ENCODE measurements at regions of chr19 and their contacts with region 1.

Region 1: DNA sequence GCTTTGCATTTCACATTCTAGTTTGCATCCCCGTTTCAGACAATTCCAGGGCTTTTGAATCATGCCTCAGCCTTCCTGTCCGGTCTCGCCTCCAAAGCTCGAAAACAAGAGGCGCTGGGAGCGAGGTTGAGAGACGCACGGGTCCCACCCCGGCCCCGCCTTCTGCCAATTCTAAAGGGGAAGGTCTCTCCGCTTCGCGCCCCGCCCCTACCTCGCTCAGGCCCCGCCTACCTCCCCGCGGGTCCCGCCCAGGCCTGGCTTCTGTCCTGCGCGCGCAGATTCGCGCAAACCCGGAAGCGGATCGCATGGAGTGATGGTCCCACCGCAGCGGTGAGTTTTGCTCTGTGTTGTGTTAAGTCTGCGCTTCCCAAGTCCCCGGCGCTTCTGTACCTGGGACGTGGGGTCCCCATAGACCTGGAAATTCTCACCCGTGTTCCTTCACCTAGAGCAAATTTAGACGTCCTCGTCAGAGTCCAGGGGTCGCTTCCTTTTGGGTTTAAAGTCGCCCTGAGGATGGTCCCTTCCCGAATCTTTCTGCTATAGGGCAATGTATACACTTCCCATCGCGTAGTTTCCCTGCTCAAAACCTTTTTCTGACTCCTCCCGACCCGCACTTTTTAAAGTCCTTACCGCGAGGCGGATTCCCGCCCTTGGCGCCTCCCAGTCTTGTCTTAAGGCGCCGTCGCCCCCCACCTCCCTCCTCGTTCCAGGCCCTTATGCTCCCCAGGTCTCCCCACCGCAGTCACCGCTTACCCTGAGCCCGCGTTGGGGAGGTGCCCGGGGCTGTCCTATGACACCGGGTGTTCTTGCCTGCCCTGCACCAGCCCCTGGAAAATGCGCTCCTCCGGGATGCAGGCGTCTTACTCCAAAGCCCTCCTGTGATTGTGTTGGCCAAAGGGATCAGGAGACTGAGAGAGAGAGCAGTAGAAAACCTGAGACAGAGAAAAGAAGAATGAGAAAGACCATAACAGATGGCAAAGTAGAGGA is at the start of gene ZNF845:
- DNase-seq: peak; percentile 73 to 74
- ATAC-seq: peak; percentile 91 to 97
- H3K4me3 ChIP-seq: peak within 1 kb of the TSS; percentile 61 to 74 (median 71)
- H3K27ac ChIP-seq: peak within 1 kb of the TSS; percentile 61 to 75 (median 69)
- H3K4me1 ChIP-seq: no peaks in the 10 kb centered on the region
- H3K27me3 ChIP-seq: no peaks in the 10 kb centered on the region
- CTCF ChIP-seq: no peak
- POLR2A ChIP-seq: peak in 1 of 2 donors; percentile 19
- total RNA-seq, gene ZNF845: 1.00 to 2.3 (median 1.4) TPM

Region 2: DNA sequence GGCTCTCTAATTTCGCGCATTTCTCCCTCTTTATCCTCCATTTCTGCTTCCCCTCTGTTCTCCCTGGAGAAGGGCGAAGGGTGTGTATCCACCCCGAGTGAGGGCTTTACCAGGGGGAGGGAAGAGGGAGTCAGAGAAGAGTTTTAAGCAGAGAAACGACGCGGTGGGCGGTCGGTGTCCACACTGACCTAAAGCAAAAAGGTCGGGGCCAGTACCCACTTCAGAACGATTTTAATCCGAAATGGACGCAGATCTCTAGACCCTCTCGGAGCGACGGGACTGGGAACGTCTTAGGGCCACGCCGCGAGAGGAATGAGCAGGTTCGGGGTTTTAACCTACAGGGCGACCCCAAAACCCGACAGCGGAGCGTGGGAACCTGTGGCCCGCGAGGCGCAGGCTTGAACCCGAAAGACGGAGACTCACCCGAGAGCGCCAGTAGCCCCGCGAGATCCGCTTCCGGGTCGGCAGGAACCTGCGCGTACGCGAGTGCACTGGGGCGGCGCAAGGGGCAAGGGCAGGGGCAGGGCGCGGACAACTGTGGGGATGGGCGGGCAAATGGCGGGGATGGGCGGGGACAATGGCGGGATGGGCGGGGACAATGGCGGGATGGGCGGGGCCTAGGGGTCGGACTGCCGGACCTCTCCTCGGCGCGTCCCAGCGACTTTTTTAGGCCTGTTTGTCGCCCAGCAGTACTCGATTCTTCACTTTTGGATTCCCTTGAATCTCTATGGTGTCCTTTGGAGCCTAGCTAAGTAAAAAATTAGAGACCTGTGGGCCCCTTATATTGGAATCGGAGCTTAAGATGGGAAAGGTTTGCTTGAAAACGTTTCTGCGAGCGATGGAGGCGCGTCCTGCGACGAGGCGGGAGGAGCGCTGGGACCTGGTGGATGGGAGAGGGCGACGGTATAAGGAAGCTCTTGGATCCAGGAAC is 79.1 kb before region 1 on chr19 and contains the start of gene ZNF677:
- in situ Hi-C with region 1: loop called in 1 of 4 experiments (anchors 10 kb)
- intact Hi-C with region 1: no loop called
- DNase-seq: peak; percentile 73 to 78
- ATAC-seq: peak; percentile 87 to 97
- H3K4me3 ChIP-seq: peak within 1 kb of the TSS; percentile 72 to 91 (median 80)
- H3K27ac ChIP-seq: peak within 1 kb of the TSS; percentile 70 to 81 (median 74)
- H3K4me1 ChIP-seq: peaks cover 6 to 12% of the 10 kb centered on the region in 2 donors
- H3K27me3 ChIP-seq: peaks cover 0 to 3% (median 0%) of the 10 kb centered on the region in 3 donors
- CTCF ChIP-seq: no peak
- POLR2A ChIP-seq: peak; percentile 18 to 35
- total RNA-seq, gene ZNF677: 1.7 to 7.2 (median 4.8) TPM

Region 3: GRCh38 chr19:53467485-53468262 is 133.9 kb after region 1 on chr19 and contains the start of gene ZNF813:
- in situ Hi-C with region 1: no loop called
- intact Hi-C with region 1: loop called (anchors 10 kb)
- DNase-seq: peak; percentile 80 to 83
- ATAC-seq: peak; percentile 92 to 93
- H3K4me3 ChIP-seq: peak within 1 kb of the TSS; percentile 64 to 80 (median 74)
- H3K27ac ChIP-seq: peak within 1 kb of the TSS; percentile 43 to 73 (median 69)
- H3K4me1 ChIP-seq: peaks cover 0 to 10% of the 10 kb centered on the region in 2 donors
- H3K27me3 ChIP-seq: peaks cover 3 to 32% (median 4%) of the 10 kb centered on the region in 3 donors
- CTCF ChIP-seq: no peak
- POLR2A ChIP-seq: peak in 1 of 2 donors; percentile 22
- total RNA-seq, gene ZNF813: 0.29 to 1.1 (median 0.57) TPM

Measured in gastrocnemius medialis (tissue), 4 donors.